ENCODE measurements at regions of chr6 and their contacts with region 1.

Region 1: DNA sequence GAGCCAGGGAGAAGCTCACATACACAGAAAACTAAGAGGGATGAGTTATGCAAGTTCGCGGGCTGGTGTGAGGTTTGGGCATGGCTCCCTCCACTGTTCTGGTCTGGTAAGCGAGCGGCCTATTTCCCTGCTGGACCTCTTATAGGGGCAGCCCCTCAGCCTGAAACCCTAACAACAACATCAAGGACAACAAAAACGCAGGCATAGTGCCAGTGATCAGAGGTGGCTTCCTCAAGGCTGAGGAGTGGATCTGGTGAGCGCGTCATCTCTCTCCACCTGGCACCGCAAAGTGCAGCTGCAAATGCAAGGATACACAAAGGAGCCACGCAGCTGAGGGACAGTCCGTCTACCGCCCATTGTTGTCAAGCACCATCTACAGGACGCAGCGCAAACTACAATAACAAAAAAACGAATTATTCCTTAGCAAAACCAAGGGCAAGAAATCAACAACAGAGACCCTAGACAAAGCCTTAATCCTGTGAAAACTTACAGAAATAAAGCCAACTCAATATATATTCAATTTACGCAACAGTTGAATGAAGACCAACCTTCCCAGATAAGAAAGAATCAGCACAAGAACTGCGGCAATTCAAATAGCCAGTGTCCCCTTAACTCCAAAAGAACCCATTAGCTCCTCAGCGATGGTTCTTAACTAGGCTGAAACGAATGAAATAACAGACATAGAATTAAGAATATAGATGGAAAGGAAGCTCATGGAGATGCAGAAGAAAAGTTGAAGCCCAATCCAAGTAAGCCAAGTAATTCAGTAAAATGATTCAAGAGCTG is 9.2 kb upstream of the DEFB110 start:
- DNase-seq: peak; percentile 42
- H3K4me3 ChIP-seq: no peak overlapping the region
- H3K27ac ChIP-seq: no peak overlapping the region
- H3K4me1 ChIP-seq: no peaks in the 10 kb centered on the region
- H3K27me3 ChIP-seq: peaks cover 3% of the 10 kb centered on the region
- CTCF ChIP-seq: peak; percentile 67

Region 2: GRCh38 chr6:49625140-49625539 is 405.8 kb before region 1 on chr6:
- CTCF ChIA-PET with region 1: no interaction called
- POLR2A ChIA-PET with region 1: no interaction called
- intact Hi-C with region 1: loop called (anchors 10 kb)
- DNase-seq: no peak
- H3K4me3 ChIP-seq: no peak overlapping the region
- H3K27ac ChIP-seq: no peak overlapping the region
- H3K4me1 ChIP-seq: no peaks in the 10 kb centered on the region
- H3K27me3 ChIP-seq: no peaks in the 10 kb centered on the region
- CTCF ChIP-seq: no peak

Region 3: GRCh38 chr6:50071921-50072320 is 41.0 kb after region 1 on chr6:
- CTCF ChIA-PET with region 1: no interaction called
- POLR2A ChIA-PET with region 1: no interaction called
- intact Hi-C with region 1: no loop called
- DNase-seq: no peak
- H3K4me3 ChIP-seq: no peak overlapping the region
- H3K27ac ChIP-seq: no peak overlapping the region
- H3K4me1 ChIP-seq: no peaks in the 10 kb centered on the region
- H3K27me3 ChIP-seq: no peaks in the 10 kb centered on the region
- CTCF ChIP-seq: no peak